T-cell (primary cell): ENCODE measurements at regions of chr11 and their contacts with region 1.

Region 1: GRCh38 chr11:33161120-33162005 is at the start of gene CSTF3:
- DNase-seq: peak; percentile 83 to 98 (median 92)
- ATAC-seq: peak; percentile 97 to 98 (median 97)
- H3K4me3 ChIP-seq: peak within 1 kb of the TSS; percentile 77 to 99
- H3K4me3 Mint-ChIP-seq: peak within 1 kb of the TSS; percentile 97 to 99 (median 98)
- H3K27ac ChIP-seq: peak within 1 kb of the TSS; percentile 79
- H3K27ac Mint-ChIP-seq: peak within 1 kb of the TSS; percentile 95 to 96
- H3K4me1 ChIP-seq: peaks cover 16 to 20% of the 10 kb centered on the region in 2 experiments
- H3K4me1 Mint-ChIP-seq: peaks cover 45 to 66% (median 55%) of the 10 kb centered on the region in 3 donors
- H3K27me3 ChIP-seq: no peaks in the 10 kb centered on the region
- H3K27me3 Mint-ChIP-seq: no peaks in the 10 kb centered on the region
- total RNA-seq, gene CSTF3: 17.3 to 27.1 (median 24.9) TPM

Region 2: DNA sequence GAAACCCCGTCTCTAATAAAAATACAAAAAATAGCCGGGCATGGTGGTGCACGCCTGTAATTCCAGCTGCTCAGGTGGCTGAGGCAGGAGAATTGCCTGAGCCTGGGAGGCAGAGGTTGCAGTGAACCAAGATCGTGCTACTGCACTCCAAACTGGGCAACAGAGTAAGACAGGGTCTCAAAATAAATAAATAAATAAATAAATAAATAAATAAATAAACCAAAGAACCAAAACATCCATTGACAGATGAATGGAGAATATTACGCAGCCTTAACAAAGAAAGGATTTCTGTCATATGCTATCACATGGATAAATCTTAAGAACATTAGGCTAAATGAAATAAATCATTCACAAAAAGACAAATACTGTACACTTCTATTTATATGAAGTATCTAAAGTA is 11.0 kb after region 1 on chr11:
- CTCF ChIA-PET with region 1: no interaction called
- POLR2A ChIA-PET with region 1: interaction called in 1 of 2 experiments, 10 read pairs
- DNase-seq: no peak
- ATAC-seq: no peak
- H3K4me3 ChIP-seq: no peak overlapping the region
- H3K4me3 Mint-ChIP-seq: no peak overlapping the region
- H3K27ac ChIP-seq: no peak overlapping the region
- H3K27ac Mint-ChIP-seq: no peak overlapping the region
- H3K4me1 ChIP-seq: no peaks in the 10 kb centered on the region
- H3K4me1 Mint-ChIP-seq: no peaks in the 10 kb centered on the region
- H3K27me3 ChIP-seq: no peaks in the 10 kb centered on the region
- H3K27me3 Mint-ChIP-seq: no peaks in the 10 kb centered on the region

Region 3: GRCh38 chr11:33290319-33290718 is 129.0 kb after region 1 on chr11:
- CTCF ChIA-PET with region 1: no interaction called
- POLR2A ChIA-PET with region 1: no interaction called
- DNase-seq: no peak
- ATAC-seq: no peak
- H3K4me3 ChIP-seq: no peak overlapping the region
- H3K4me3 Mint-ChIP-seq: no peak overlapping the region
- H3K27ac ChIP-seq: no peak overlapping the region
- H3K27ac Mint-ChIP-seq: no peak overlapping the region
- H3K4me1 ChIP-seq: peaks cover 0 to 2% of the 10 kb centered on the region in 2 experiments
- H3K4me1 Mint-ChIP-seq: peaks cover 25 to 54% (median 41%) of the 10 kb centered on the region in 3 donors
- H3K27me3 ChIP-seq: no peaks in the 10 kb centered on the region
- H3K27me3 Mint-ChIP-seq: no peaks in the 10 kb centered on the region

Region 4: GRCh38 chr11:33329705-33330329 is 168.5 kb after region 1 on chr11:
- CTCF ChIA-PET with region 1: interaction called, 6 to 14 read pairs
- POLR2A ChIA-PET with region 1: interaction called in 1 of 2 experiments, 3 read pairs
- DNase-seq: peak in 30 of 35 experiments; percentile 11 to 72 (median 29)
- ATAC-seq: peak in 3 of 4 experiments; percentile 64 to 71 (median 70)
- H3K4me3 ChIP-seq: no peak overlapping the region
- H3K4me3 Mint-ChIP-seq: no peak overlapping the region
- H3K27ac ChIP-seq: no peak overlapping the region
- H3K27ac Mint-ChIP-seq: no peak overlapping the region
- H3K4me1 ChIP-seq: no peaks in the 10 kb centered on the region
- H3K4me1 Mint-ChIP-seq: peaks cover 32 to 36% (median 34%) of the 10 kb centered on the region in 3 donors
- H3K27me3 ChIP-seq: no peaks in the 10 kb centered on the region
- H3K27me3 Mint-ChIP-seq: no peaks in the 10 kb centered on the region